ENCODE measurements at regions of chr15 and their contacts with region 1.

Region 1: DNA sequence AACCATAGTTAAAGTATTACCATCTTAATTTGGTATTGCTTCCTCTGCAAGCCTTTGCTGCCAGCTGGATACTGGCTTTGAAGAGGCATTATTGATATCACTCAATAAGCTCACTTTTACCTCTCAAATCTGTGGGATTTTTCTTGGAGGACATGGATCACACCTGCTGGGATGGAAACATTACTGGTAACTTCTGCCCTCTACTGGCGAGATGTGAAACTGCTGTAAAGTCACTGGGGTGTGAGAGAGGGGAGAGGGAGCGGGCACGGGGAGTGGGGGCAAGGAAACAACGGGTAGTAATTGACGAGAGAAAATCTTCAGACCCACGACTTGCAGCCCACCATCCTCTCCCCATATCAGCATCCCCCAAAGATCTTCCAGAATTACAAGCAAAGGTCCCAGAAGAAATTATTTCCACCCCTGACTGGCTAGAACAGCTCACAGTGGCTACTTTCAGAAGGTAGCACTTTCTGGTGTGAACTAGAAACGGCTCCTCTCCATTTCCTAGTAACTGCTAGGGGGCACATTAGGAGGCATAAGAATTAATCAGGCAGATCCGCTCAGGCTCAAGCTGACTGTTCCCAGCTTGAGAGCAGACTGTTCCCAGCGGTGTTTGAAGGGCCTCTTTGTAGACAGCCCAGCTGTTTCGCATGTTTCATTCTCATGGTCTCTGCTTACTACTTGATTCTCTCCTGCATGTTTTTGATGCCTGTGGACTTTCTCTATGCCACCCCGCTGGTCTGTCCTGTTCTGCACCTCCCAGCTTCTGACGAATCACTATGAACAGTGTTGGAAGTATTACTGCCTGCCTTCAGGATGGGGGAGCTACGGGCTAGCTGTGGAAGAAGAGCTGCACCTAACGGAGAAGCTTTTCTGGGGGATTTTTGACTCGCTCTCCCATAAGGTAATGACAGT is 230.4 kb upstream of the CHRM5 start:
- DNase-seq: peak; percentile 16
- ATAC-seq: peak; percentile 89
- H3K4me3 ChIP-seq: no peak overlapping the region
- H3K27ac ChIP-seq: no peak overlapping the region
- H3K4me1 ChIP-seq: no peaks in the 10 kb centered on the region
- H3K27me3 ChIP-seq: 0 out of 2 replicates have a peak, but pooled peaks cover 7% of the 10 kb centered on the region
- CTCF ChIP-seq: peak; percentile 35 to 84 (median 83); a peak in 5 of 6 replicates
- POLR2A ChIP-seq: no peak
- RAD21 ChIP-seq: peak; percentile 27

Region 2: DNA sequence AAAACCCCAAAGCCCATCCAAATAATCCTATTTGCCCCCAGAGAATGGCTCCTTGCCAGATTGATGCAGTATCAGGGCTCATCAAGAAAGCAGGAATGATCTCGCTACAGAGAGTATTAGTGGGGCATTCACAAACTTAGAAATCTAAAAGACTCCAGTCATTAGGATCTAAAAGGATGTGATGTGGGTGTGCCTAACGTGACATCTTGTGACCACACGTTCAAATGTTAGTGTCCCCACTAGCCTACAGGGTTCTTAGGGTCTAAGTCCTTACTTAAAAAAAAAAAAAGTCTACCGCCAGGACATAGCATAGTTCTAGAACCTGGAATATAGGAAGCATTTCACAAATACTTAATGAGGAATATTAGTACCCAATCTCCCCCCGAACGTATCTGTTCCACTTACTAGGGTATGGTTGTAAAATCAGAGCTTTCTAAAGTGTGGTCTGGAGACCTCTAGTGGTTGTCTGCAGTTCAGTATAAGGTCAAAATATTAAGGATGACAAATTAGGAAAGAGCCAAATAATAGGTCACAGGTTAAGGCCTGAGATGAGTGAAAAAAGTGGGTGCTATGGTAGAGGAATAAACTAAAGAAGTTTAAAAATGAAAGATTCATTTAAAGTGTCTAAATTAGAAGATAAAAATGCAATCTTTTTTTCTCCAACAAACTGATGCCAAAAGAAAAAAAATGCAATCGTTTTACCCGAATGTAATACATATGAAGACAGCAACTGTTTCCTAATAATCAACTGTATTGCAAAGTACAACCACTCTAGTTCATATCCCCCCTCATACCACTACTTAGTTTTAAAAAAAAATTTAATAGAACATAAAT is 226.1 kb after region 1 on chr15:
- CTCF ChIA-PET with region 1: interaction called, 7 read pairs
- POLR2A ChIA-PET with region 1: no interaction called
- RAD21 ChIA-PET with region 1: no interaction called
- intact Hi-C with region 1: loop called (anchors 1 kb)
- DNase-seq: peak; percentile 12
- ATAC-seq: peak; percentile 78
- H3K4me3 ChIP-seq: no peak overlapping the region
- H3K27ac ChIP-seq: no peak overlapping the region
- H3K4me1 ChIP-seq: no peaks in the 10 kb centered on the region
- H3K27me3 ChIP-seq: no peaks in the 10 kb centered on the region
- CTCF ChIP-seq: peak; percentile 25 to 82 (median 76); a peak in 5 of 6 replicates
- POLR2A ChIP-seq: no peak
- RAD21 ChIP-seq: peak; percentile 56

Region 3: GRCh38 chr15:33994005-33994615 is 256.2 kb after region 1 on chr15:
- CTCF ChIA-PET with region 1: interaction called, 8 read pairs
- POLR2A ChIA-PET with region 1: no interaction called
- RAD21 ChIA-PET with region 1: no interaction called
- intact Hi-C with region 1: loop called (anchors 5 kb)
- DNase-seq: peak; percentile 22
- ATAC-seq: peak; percentile 91
- H3K4me3 ChIP-seq: no peak overlapping the region
- H3K27ac ChIP-seq: no peak overlapping the region
- H3K4me1 ChIP-seq: no peaks in the 10 kb centered on the region
- H3K27me3 ChIP-seq: no peaks in the 10 kb centered on the region
- CTCF ChIP-seq: peak; percentile 14 to 69 (median 59); a peak in 4 of 6 replicates
- POLR2A ChIP-seq: no peak
- RAD21 ChIP-seq: peak; percentile 52

Region 4: DNA sequence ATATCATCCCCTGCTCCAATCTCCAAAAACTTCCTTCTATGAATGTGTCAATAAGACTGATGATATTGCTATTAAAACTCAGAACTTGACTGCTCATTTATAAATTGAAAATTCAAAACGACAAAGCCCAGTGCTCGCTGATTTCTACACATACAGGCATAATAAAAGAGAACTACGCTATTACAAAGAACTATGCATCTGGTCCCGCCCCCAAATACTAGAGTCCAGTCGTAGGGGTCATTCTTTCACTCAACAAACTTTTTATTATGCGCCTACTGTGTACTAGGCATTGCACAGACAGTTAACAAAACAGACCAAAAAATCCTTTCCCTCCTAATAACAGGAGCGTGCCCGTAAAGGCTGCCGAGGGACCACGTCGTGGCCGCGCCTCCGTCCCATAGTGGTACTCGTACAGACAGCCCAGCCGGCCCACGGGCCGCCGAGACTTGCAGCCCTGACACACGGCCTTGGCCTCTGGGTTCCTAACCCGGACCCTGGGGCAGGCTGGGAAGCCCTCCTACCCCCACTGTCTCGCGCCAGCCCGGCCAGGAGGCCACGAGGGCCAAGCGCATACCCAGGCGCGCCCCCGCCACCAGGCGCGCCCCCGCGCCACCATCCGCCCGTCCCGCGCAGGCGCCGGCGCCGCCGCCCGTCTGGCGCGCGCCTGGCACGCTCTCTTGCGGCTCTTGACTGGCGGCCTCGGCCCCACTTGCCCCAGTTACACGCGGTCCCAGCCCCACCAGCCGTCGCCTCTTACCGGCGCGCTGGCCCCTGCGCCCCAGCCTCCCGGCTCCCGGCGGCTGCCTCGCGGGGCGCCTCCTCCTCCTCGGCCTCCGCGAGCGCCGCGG is 300.3 kb after region 1 on chr15:
- CTCF ChIA-PET with region 1: no interaction called
- POLR2A ChIA-PET with region 1: no interaction called
- RAD21 ChIA-PET with region 1: no interaction called
- intact Hi-C with region 1: no loop called
- DNase-seq: no peak
- ATAC-seq: peak; percentile 81
- H3K4me3 ChIP-seq: peak overlapping the region; percentile 59 to 80
- H3K27ac ChIP-seq: peak overlapping the region; percentile 87
- H3K4me1 ChIP-seq: peaks cover 4 to 18% of the 10 kb centered on the region in 2 experiments; a peak in 3 of 4 replicates
- H3K27me3 ChIP-seq: no peaks in the 10 kb centered on the region
- CTCF ChIP-seq: no peak
- POLR2A ChIP-seq: peak; percentile 82
- RAD21 ChIP-seq: no peak

Region 5: GRCh38 chr15:34367101-34368081 is 629.4 kb after region 1 on chr15 and contains the start of gene LPCAT4:
- CTCF ChIA-PET with region 1: no interaction called
- POLR2A ChIA-PET with region 1: no interaction called
- RAD21 ChIA-PET with region 1: no interaction called
- intact Hi-C with region 1: no loop called
- DNase-seq: peak; percentile 69
- ATAC-seq: peak; percentile 87
- H3K4me3 ChIP-seq: peak within 1 kb of the TSS; percentile 88 to 98
- H3K27ac ChIP-seq: peak within 1 kb of the TSS; percentile 96
- H3K4me1 ChIP-seq: peaks cover 15 to 28% of the 10 kb centered on the region in 2 experiments
- H3K27me3 ChIP-seq: no peaks in the 10 kb centered on the region
- CTCF ChIP-seq: peak; percentile 88 to 95 (median 93)
- POLR2A ChIP-seq: peak; percentile 88
- RAD21 ChIP-seq: peak; percentile 81
- total RNA-seq, gene LPCAT4: 77.1 TPM